ENCODE measurements at regions of chr17 and their contacts with region 1.

Region 1: GRCh38 chr17:8294814-8295316 is 335 bp downstream of the SLC25A35 start:
- DNase-seq: no peak
- ATAC-seq: peak; percentile 32

Region 2: DNA sequence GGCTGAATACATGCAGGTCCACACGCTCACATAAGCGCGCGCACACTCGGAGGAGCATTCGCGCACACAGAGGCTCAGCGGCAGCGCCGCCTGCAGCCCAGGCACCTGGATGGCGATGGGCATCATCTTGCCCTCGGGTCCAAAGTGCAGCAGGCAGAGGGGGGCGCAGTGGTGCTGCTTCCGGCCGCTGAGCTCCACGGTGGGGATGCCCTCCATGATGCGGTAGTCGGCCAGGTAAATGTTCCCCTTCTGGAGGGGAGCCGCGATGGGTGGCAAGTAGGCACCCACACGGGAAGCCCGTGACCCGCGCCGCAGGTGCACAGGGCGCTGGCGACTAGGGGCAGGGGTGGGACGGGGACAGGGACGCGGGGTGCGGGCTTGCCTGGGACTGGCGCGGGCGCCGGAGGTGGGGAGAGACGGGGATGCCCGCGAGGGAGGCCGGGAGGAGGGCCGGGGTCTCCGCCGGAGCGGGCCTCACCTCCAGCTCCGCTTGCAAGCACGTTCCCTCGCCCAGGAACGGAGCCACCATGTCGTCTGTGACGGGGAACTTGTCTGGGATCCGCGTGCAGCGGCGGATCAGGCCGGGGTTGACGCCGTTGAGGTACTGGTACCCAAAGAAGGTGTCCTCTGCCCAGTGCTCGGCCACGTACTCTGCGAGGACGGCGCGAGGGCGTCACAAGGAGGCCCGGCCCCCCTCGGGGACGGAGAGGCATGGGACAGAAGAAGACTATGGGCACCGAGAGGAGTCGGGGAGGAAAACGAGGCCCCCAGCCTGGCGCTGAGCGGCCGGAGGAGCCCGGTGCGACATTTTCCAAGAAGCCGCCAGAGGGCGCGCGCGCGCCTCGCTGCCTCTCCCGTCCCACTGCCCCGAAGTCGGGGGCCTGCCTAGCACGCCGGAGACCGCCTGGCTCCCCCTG is 215.3 kb before region 1 on chr17:
- intact Hi-C with region 1: loop called (anchors 10 kb)
- DNase-seq: peak; percentile 84
- ATAC-seq: peak; percentile 96

Region 3: DNA sequence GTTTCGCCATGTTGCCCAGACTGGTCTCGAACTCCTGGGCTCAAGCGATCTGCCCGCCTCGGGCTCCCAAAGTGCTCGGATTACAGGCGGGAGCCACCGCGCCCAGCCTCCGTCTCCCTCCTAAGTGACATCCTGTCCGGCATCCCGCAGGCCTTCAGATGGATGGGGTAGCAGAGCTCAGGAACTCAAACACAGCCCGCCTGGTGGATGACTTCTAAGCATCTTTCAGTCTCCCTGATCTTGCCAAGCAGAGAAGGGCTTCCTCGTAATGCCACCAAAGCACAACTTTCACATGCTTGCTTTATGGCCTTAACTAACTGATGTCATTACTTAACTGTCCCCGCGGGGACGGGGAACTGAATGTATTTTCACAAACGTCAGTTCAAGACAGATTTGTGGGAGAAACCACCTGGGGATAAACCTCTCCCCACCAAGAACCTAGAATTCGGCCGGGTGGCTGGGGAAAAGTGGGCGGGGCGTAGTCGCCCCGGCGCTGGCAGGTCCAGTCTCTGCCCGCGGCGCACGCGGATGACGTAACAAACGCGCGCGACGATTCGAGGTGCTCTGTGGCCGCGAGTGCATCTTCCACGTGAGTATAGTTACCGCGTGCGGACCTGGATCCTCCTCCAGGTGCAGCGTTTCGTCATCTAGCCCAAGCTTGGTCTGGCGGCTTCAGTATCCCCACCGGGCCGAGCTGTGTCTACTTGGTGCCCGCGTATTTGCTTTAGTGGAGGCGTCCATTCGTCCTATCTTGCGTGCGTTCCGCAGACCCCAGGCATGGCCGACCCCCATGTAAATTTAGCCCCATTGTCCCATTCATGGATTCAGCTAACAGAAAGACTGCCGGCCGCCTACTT is 45.9 kb before region 1 on chr17 and contains the start of gene PFAS:
- intact Hi-C with region 1: loop called (anchors 10 kb)
- DNase-seq: peak; percentile 98
- ATAC-seq: peak; percentile 88
- total RNA-seq, gene PFAS: 10.0 TPM

Region 4: DNA sequence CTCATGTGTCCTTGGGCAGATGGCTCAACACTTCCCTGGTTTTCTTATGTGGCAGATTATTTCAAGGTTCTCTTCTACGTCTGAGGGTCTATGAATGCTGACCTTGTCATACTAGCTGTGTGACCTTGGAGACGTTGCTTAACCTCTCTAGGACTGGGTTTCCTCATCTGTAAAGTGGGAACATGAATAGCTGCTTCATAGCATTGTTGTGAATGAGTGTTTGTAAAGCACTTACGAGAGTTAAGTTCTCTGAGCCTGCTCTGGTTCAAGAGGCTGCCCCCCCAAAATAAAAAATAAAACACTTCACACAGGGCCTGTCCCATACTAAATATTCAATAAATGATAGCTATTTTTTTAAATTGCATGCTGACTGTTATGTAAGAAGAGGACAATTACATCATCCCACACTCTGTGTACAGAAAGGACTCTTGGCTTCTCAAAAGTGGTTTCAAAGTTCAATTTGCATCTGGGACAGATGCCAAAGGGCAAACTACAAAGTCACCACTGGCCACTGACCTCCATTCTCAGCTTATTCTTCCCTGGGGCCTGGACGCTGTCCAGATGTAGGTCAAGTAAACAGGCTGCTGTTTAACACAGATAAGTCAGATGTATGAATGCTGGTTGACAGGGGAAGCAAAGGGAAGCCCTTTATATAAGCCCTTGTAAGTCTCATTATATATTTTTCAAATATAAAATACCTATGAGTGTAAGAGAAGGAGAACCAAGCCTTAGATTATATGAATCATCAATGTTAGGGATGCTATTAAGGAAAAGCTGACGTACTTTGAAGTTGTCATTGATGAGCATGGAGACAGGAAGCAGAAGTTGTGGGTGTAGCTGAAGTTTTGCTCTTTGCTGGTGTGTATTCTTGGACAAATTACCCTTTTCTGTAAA is 125.4 kb after region 1 on chr17:
- intact Hi-C with region 1: no loop called
- DNase-seq: peak; percentile 66
- ATAC-seq: peak; percentile 94

Region 5: DNA sequence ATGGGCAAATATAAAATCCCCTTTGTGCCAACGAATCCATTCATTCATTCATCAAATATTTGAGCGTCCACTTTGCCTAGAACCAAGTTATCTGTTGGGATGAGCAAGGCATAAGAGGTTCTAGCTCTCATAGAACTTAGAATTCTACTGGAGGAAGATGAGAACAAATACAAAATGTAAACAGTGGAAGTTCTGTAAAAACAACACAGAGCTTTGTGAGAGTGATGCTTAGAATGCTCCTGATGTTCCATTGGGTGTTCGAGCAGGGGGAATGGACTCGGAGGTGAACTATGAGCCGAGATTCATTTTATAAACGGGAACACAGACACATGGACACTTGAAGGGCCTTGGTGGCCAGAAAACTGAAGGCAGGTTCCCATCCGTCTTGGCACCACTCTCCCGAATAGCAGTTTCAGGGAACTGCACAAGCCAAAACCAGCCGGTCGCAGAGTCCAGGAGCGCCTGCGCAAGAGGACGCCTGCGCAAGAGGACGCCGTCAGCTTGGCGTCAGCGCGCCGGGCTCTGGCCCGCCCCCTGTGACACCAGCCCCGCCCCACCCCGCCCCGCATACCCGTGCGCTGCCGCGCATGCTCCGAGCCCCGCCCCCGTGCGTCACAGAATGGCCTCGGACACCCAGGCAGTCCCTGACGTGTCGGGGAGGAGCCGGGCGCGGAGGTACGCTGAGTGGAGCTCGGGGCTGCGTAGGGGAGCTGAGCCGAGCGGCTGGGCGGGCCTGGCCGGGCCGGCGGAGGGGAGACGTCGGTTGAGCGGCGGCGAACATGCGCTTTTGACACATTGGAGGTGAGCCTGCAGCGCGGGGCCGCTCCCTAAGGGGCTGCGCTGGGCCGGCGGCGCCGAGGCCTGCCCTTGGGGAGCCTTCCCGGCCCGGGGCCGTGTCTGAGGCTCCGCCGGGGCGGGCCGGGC is 140.6 kb after region 1 on chr17 and contains the start of gene NDEL1:
- intact Hi-C with region 1: no loop called
- DNase-seq: peak; percentile 100
- ATAC-seq: peak; percentile 98
- total RNA-seq, gene NDEL1: 24.8 TPM